Activated CD4-positive, alpha-beta memory T cell treated with anti-CD3 and anti-CD28 coated beads for 36 hours (primary cell): ENCODE measurements at regions of chr11 and their contacts with region 1.

Region 1: DNA sequence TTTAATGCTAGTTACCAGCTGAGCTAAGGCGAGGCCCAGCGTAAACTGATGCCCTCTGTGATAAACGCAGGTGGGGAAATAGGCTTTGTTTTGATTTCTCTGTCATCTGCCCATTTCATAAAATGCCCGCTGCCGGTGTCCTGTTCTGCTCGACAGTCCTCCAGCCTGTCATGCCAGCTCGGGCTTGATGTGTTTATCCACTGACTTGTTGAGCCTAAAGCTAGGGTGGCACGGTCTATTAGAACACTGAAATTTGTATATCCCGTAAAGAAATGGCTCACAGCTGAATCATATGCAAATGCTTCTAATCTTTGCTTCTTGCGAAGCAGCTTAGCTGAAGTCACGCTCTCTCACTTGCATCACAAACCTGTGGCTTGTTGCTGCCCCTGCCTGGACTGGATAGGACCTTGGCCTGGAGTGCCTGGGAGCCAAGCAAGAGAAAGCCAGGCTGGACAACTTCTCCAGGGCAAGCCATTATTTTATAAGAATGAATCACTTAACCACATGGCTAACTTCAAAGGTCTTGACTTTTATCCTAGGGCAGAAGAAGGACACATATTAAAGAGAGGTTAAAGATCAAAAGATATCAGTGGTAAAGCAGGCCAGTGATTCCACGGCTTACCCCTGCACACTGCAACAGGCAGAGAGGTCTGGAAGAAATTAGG is 33.1 kb downstream of the EHF start:
- DNase-seq: peak; percentile 47
- H3K4me3 Mint-ChIP-seq: no peak overlapping the region
- H3K27ac Mint-ChIP-seq: no peak overlapping the region
- H3K4me1 Mint-ChIP-seq: peaks cover 48% of the 10 kb centered on the region
- H3K27me3 Mint-ChIP-seq: peaks cover 44% of the 10 kb centered on the region

Region 2: DNA sequence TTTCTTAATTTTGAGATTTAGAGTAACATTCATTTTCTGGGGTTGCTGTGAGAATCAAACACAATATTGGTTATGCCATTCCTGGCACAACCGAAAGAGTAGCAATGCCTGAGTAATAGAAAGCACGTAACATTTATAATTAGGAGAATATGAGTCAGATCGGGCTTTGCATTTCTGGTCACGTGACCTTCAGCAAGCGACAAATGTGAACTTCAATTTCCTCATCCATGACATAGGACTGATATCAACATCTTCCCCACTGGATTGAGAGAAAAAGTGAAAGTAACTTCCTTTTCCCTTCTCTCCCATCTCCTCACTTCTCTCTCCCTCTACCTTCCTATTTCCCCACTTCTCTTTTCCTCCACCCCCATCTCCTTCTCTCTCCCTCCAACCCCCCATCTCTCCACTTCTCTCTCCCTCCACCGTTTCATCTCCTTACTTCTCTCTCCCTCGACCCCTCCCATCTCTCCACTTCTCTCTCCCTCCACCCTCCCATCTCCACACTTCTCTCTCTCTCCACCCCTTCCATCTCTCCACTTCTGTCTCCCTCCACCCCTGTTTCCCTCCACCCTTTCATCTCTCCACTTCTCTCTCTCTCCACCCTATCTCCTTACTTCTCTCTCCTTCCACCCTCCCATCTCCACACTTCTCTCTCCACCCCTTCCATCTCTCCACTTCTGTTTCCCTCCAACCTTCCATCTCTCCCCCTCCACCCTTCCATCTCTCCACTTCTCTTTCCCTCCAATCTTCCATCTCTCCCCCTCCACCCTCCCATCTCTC is 248.7 kb before region 1 on chr11:
- CTCF ChIA-PET with region 1: no interaction called
- POLR2A ChIA-PET with region 1: no interaction called
- intact Hi-C with region 1: loop called (anchors 10 kb)
- DNase-seq: peak; percentile 32
- H3K4me3 Mint-ChIP-seq: peak overlapping the region; percentile 14
- H3K27ac Mint-ChIP-seq: no peak overlapping the region
- H3K4me1 Mint-ChIP-seq: peaks cover 18% of the 10 kb centered on the region
- H3K27me3 Mint-ChIP-seq: peaks cover 14% of the 10 kb centered on the region

Region 3: DNA sequence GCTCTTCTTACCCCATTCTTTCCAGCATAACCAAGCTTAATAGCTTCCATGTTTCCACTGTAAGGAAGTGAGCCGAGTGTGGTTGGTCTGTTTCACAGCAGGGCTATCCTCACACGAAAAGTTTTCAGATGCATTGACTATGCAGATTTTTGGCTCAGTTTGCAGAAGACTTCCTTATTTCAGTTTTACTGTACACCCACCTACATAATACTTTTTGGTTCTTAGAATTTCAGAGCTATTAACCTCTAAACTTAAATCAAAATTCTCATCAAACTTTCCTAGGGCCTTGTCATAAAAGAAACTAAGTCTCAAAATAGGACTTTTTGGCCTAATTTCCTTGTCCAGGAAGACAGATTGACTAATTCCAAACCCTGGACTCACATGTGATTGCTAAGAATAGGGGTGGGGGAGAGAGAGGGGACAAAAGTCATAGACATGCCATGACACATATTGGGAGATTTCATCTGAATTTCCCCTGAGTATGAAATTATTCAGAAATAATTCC is 40.4 kb before region 1 on chr11:
- CTCF ChIA-PET with region 1: interaction called, 5 read pairs
- POLR2A ChIA-PET with region 1: interaction called, 6 read pairs
- intact Hi-C with region 1: loop called (anchors 2 kb)
- DNase-seq: no peak
- H3K4me3 Mint-ChIP-seq: no peak overlapping the region
- H3K27ac Mint-ChIP-seq: no peak overlapping the region
- H3K4me1 Mint-ChIP-seq: peaks cover 16% of the 10 kb centered on the region
- H3K27me3 Mint-ChIP-seq: peaks cover 20% of the 10 kb centered on the region

Region 4: GRCh38 chr11:34685864-34686263 is 31.9 kb after region 1 on chr11:
- CTCF ChIA-PET with region 1: interaction called, 3 read pairs
- POLR2A ChIA-PET with region 1: no interaction called
- intact Hi-C with region 1: loop called (anchors 2 kb)
- DNase-seq: no peak
- H3K4me3 Mint-ChIP-seq: no peak overlapping the region
- H3K27ac Mint-ChIP-seq: no peak overlapping the region
- H3K4me1 Mint-ChIP-seq: peaks cover 5% of the 10 kb centered on the region
- H3K27me3 Mint-ChIP-seq: peaks cover 3% of the 10 kb centered on the region

Region 5: DNA sequence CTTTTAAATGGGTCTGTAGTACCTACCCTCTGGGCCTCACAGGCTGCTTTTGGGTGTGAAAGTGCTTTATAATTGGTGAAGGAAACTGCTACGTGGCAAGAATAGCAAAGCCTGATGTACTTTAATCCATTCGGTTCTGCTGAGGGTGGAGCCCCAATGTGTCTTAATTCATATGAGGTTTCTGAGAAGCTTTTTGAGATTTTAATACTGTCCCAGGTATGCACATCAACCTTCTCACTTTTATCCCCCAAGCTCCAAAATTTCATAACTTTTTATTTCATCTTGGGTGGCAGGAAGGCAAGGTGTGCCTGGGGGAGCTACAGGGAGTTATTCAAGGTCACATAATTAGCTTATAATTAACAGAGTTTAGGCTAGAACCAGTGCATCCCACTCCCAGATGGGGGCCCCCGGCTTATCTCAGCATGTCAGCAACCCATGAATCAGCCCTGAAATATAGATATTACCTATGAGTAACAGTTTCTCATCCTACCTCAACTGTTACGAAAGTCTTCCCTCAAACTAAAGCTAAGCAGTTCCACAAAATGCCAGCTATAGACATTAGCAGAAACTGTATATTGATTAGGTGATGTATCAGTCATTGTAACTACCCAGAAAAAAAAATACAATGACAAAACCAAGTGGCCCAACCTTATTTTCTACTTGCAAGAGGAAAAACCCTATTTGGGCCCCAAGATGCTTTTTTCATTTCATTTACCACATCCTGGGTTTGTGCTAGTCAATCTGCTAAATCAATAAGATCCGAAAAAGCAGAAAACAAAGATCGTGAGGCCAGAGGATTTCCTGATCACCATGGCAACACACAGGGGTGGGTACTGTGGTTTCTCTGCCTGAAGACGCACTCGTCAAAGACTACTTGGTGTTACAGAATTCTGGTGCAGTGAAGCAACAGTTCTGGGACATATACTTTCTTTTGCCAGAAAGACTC is 511.7 kb after region 1 on chr11:
- CTCF ChIA-PET with region 1: no interaction called
- POLR2A ChIA-PET with region 1: no interaction called
- intact Hi-C with region 1: loop called (anchors 5 kb)
- DNase-seq: peak; percentile 95
- H3K4me3 Mint-ChIP-seq: peak overlapping the region; percentile 71
- H3K27ac Mint-ChIP-seq: peak overlapping the region; percentile 99
- H3K4me1 Mint-ChIP-seq: peaks cover 99% of the 10 kb centered on the region
- H3K27me3 Mint-ChIP-seq: no peaks in the 10 kb centered on the region

Region 6: DNA sequence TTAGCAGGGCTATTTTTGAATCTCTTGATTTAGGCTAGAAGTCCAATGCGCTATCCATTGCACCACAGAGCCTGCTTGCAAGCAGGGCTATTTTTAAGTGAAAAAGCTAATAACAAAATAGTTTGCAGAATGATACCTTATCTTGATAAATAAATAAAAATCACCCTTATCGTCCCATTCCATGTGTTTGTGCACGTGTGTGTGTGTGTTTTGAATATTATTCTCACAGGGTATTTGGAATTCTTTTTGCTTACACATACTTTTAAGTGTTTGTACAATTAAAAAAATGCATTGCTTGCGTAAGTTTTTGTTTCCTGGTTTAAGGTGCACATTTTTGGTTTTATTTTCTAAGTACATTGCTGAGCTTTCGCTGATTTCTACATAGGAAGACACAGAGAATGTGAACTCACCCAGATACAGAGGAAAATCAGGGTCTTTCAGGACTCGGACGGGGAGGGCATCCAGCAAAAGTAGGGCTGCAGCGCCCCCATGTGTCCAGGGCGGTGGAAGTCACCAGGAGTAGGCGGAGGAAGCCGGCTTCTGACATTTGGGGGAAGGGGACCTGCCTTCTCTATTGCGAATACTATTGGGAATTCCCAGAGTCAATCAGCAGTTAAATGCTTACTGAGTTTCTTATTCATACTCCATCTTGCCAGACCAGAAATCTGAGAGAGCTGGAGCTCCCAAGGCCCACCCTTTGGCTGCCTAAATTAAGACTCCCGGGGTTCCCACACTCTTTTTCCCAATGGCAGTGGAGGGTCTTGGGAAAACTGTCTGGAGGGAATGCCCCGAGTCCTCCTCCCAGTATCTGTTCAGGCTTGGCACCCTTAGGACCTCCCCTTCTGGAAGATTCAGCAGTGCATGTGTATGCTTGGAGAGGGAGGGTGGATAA is 738.2 kb after region 1 on chr11:
- CTCF ChIA-PET with region 1: interaction called, 4 read pairs
- POLR2A ChIA-PET with region 1: no interaction called
- intact Hi-C with region 1: loop called (anchors 5 kb)
- DNase-seq: peak; percentile 89
- H3K4me3 Mint-ChIP-seq: no peak overlapping the region
- H3K27ac Mint-ChIP-seq: no peak overlapping the region
- H3K4me1 Mint-ChIP-seq: peaks cover 29% of the 10 kb centered on the region
- H3K27me3 Mint-ChIP-seq: peaks cover 4% of the 10 kb centered on the region